ENCODE measurements at regions of chr5 and their contacts with region 1.

Region 1: GRCh38 chr5:167546270-167546669 is 745.2 kb upstream of the WWC1 start:
- DNase-seq: no peak
- H3K4me3 ChIP-seq: no peak overlapping the region
- H3K27ac ChIP-seq: no peak overlapping the region
- H3K4me1 ChIP-seq: peaks cover 11% of the 10 kb centered on the region
- H3K27me3 ChIP-seq: no peaks in the 10 kb centered on the region
- CTCF ChIP-seq: no peak

Region 2: GRCh38 chr5:166980666-166981065 is 565.6 kb before region 1 on chr5:
- CTCF ChIA-PET with region 1: no interaction called
- POLR2A ChIA-PET with region 1: no interaction called
- intact Hi-C with region 1: loop called (anchors 5 kb)
- DNase-seq: no peak
- H3K4me3 ChIP-seq: no peak overlapping the region
- H3K27ac ChIP-seq: no peak overlapping the region
- H3K4me1 ChIP-seq: peaks cover 6% of the 10 kb centered on the region
- H3K27me3 ChIP-seq: peaks cover 51% of the 10 kb centered on the region
- CTCF ChIP-seq: no peak

Measured in A673 (cell line).